ENCODE measurements at regions of chr2 and their contacts with region 1.

Region 1: DNA sequence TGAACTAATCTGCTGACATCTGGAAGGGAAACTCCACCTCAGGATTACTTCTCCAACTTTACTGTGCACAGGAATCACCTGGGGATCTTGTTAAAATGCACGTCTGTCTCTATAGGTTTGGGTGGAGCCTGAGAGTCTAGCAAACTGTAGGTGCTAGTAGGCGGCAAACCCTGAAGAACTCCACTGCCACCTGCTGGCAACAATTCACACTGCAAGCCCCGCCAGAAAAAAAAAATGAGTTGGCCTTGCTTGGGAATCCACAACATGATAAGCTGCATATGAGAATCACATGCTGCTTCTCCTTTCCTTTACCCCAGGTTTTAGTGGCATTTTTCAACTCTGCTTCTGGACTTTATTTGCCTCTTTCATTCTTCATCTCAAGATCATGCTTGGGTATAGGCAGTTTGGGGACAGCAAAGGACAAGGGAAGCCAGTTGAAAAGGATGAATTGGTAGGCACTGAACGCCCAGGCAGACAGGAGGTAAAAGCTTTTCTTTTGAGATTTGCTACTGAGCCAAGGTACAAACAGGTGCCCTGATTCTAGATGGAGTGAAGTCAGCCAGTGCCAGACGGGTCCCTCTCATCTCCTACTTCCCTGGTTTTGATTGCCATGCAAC is 88.8 kb downstream of the VIT start:
- DNase-seq: peak; percentile 72
- H3K4me3 ChIP-seq: no peak overlapping the region
- H3K27ac ChIP-seq: no peak overlapping the region
- H3K4me1 ChIP-seq: peaks cover 8% of the 10 kb centered on the region
- H3K27me3 ChIP-seq: no peaks in the 10 kb centered on the region
- CTCF ChIP-seq: peak; percentile 94

Region 2: DNA sequence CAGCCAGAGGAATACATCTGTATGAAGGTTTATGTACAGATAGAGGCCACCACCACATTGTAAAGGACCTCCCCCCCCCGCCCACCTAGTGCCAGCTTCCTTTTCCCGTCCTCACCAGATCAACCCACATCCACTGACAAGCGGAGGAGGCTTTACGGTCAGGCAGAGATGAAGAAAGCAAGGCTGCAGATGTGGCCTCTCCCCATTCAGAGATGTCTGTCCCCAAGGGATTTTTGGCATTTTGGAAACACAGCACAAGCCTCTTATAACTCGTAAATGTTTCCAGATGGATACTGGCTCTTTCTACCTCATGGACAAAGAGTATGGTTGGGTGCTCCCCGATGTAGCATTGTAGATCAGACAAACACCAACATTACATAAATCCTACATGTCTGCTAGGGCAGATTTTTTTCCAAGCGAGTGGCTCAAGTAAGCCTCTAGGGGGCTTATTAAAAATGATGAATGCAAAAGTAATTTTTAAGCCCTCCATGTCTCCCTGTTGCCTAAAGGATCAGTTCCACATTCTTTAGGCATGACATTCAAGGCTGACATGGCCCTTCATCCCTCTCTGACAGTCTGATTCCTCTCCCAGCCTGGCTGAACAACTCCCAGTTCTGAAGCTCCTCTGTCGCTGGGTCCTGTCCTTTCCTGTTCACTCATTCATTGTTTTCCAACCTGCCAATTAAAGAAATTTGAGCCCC is 77.1 kb before region 1 on chr2:
- CTCF ChIA-PET with region 1: no interaction called
- POLR2A ChIA-PET with region 1: no interaction called
- intact Hi-C with region 1: no loop called
- DNase-seq: peak; percentile 64
- H3K4me3 ChIP-seq: no peak overlapping the region
- H3K27ac ChIP-seq: no peak overlapping the region
- H3K4me1 ChIP-seq: peaks cover 19% of the 10 kb centered on the region
- H3K27me3 ChIP-seq: no peaks in the 10 kb centered on the region
- CTCF ChIP-seq: peak; percentile 40; the same call in 1 of the 2 replicates

Region 3: GRCh38 chr2:36918307-36918706 is 133.0 kb after region 1 on chr2:
- CTCF ChIA-PET with region 1: interaction called, 5 read pairs
- POLR2A ChIA-PET with region 1: no interaction called
- intact Hi-C with region 1: loop called (anchors 10 kb)
- DNase-seq: no peak
- H3K4me3 ChIP-seq: no peak overlapping the region
- H3K27ac ChIP-seq: no peak overlapping the region
- H3K4me1 ChIP-seq: peaks cover under 1% of the 10 kb centered on the region
- H3K27me3 ChIP-seq: no peaks in the 10 kb centered on the region
- CTCF ChIP-seq: peak; percentile 48; the same call in 1 of the 2 replicates

Region 4: GRCh38 chr2:37005118-37005868 is 220.0 kb after region 1 on chr2:
- CTCF ChIA-PET with region 1: no interaction called
- POLR2A ChIA-PET with region 1: no interaction called
- intact Hi-C with region 1: loop called (anchors 2 kb)
- DNase-seq: peak; percentile 35
- H3K4me3 ChIP-seq: no peak overlapping the region
- H3K27ac ChIP-seq: no peak overlapping the region
- H3K4me1 ChIP-seq: no peaks in the 10 kb centered on the region
- H3K27me3 ChIP-seq: no peaks in the 10 kb centered on the region
- CTCF ChIP-seq: peak; percentile 67

Region 5: GRCh38 chr2:37026050-37026449 is 240.8 kb after region 1 on chr2:
- CTCF ChIA-PET with region 1: no interaction called
- POLR2A ChIA-PET with region 1: no interaction called
- intact Hi-C with region 1: loop called (anchors 5 kb)
- DNase-seq: peak; percentile 40
- H3K4me3 ChIP-seq: no peak overlapping the region
- H3K27ac ChIP-seq: no peak overlapping the region
- H3K4me1 ChIP-seq: no peaks in the 10 kb centered on the region
- H3K27me3 ChIP-seq: no peaks in the 10 kb centered on the region
- CTCF ChIP-seq: peak; percentile 45

Region 6: GRCh38 chr2:37080266-37080665 is 295.0 kb after region 1 on chr2:
- CTCF ChIA-PET with region 1: no interaction called
- POLR2A ChIA-PET with region 1: no interaction called
- intact Hi-C with region 1: no loop called
- DNase-seq: no peak
- H3K4me3 ChIP-seq: no peak overlapping the region
- H3K27ac ChIP-seq: no peak overlapping the region
- H3K4me1 ChIP-seq: peaks cover 3% of the 10 kb centered on the region
- H3K27me3 ChIP-seq: no peaks in the 10 kb centered on the region
- CTCF ChIP-seq: no peak